Activated B cell treated with CpG ODN at 0.5 μM for 24 hours (primary cell): ENCODE measurements at regions of chr2 and their contacts with region 1.

Region 1: GRCh38 chr2:197705121-197705911 is at the start of gene MARS2:
- DNase-seq: peak; percentile 89
- ATAC-seq: peak; percentile 92
- H3K4me3 Mint-ChIP-seq: peak within 1 kb of the TSS; percentile 89
- H3K27ac Mint-ChIP-seq: peak within 1 kb of the TSS; percentile 89
- H3K4me1 Mint-ChIP-seq: peaks cover 41% of the 10 kb centered on the region
- H3K27me3 Mint-ChIP-seq: peaks cover 14% of the 10 kb centered on the region
- CTCF ChIP-seq: no peak
- total RNA-seq, gene MARS2: 14.6 and 15.4 TPM in 2 replicates

Region 2: GRCh38 chr2:196639180-196640030 is 1065.9 kb before region 1 on chr2 and contains the start of gene CCDC150:
- CTCF ChIA-PET with region 1: no interaction called
- POLR2A ChIA-PET with region 1: no interaction called
- intact Hi-C with region 1: loop called (anchors 1 kb)
- DNase-seq: peak; percentile 90
- ATAC-seq: peak; percentile 100
- H3K4me3 Mint-ChIP-seq: peak within 1 kb of the TSS; percentile 89
- H3K27ac Mint-ChIP-seq: peak within 1 kb of the TSS; percentile 53
- H3K4me1 Mint-ChIP-seq: peaks cover 14% of the 10 kb centered on the region
- H3K27me3 Mint-ChIP-seq: no peaks in the 10 kb centered on the region
- CTCF ChIP-seq: no peak
- total RNA-seq, gene CCDC150: 2.3 and 2.6 TPM in 2 replicates

Region 3: DNA sequence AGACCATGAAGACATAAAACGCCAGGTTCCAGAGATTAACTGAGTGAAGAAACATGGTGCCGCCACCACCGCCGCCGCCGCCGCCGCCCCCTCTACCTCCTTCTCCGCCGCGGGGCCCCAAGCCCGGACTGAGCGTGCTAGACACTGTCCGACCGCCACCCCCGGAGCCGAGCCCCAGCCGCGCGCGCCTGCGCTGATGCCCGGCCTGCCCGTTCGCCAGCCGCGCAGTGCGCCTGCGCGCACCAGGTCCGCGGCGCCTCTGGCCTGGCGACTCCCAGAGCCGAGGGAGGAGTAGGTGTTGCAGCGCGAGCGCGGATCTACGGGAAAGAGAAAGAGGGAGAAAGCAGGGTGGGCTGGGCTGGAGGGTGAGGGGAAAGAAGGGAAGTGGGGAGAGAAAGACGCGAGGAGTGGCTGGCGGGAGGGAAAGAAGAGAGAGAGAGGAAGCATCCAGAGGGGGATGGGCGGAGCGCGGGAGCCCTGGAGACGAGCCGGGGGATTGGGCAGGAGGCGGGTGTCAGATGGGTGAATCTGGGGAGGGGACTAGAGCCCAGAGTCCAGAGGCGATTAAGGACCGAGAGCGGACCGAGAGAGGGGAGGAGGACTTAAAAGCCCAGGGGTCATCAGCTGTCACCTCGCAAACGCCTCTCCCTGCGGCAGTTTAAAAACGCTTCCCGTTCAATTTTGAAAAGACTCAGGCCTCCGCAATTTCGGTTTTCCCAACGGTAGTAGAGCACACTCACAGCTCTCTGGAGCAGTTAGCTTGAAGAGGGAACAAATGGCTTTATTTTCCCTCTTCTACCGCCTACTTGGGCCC is 778.5 kb before region 1 on chr2 and contains the start of gene PGAP1:
- CTCF ChIA-PET with region 1: no interaction called
- POLR2A ChIA-PET with region 1: no interaction called
- intact Hi-C with region 1: loop called (anchors 2 kb)
- DNase-seq: peak; percentile 82
- ATAC-seq: peak; percentile 91
- H3K4me3 Mint-ChIP-seq: peak within 1 kb of the TSS; percentile 90
- H3K27ac Mint-ChIP-seq: peak within 1 kb of the TSS; percentile 86
- H3K4me1 Mint-ChIP-seq: peaks cover 21% of the 10 kb centered on the region
- H3K27me3 Mint-ChIP-seq: peaks cover 13% of the 10 kb centered on the region
- CTCF ChIP-seq: no peak
- total RNA-seq, gene PGAP1: 1.9 and 2.9 TPM in 2 replicates

Region 4: DNA sequence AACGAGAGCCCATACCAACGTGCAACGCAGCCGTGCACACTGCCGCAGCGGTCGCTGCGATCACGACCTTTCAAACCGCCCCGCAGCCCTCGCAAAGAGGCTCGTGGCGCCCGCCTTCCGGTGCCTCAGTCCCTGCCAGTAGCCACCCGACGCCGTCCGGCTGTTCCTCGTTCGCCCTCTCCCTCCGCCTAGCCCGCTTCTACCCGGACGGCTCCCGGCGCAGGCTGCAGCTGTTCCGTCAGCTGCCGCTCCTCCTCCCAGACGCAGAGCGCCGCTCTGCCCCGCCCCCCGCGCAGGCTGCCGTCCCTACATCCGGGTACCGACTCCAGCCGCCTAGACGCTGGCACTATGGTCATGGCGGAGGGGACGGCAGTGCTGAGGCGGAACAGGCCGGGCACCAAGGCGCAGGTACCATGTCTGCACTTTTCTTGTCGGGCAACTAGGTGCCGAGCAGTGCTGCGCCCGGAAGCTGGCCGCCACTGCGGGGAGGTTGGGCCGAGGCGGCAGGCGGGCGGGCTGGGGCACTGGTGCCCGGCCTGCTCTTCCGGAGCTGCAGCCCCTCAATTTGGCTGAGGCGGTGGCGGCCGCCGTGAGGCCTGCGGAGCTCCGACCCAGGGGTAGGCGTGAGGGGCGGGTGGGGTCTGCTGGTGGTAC is 189.4 kb before region 1 on chr2 and contains the start of gene MOB4:
- CTCF ChIA-PET with region 1: no interaction called
- POLR2A ChIA-PET with region 1: interaction called, 7 read pairs
- intact Hi-C with region 1: loop called (anchors 1 kb)
- DNase-seq: peak; percentile 96
- ATAC-seq: peak; percentile 95
- H3K4me3 Mint-ChIP-seq: peak within 1 kb of the TSS; percentile 96
- H3K27ac Mint-ChIP-seq: peak within 1 kb of the TSS; percentile 95
- H3K4me1 Mint-ChIP-seq: peaks cover 33% of the 10 kb centered on the region
- H3K27me3 Mint-ChIP-seq: no peaks in the 10 kb centered on the region
- CTCF ChIP-seq: no peak
- total RNA-seq, gene MOB4: 21.7 and 22.1 TPM in 2 replicates

Region 5: GRCh38 chr2:198127627-198128026 is 422.3 kb after region 1 on chr2:
- CTCF ChIA-PET with region 1: no interaction called
- POLR2A ChIA-PET with region 1: no interaction called
- intact Hi-C with region 1: loop called (anchors 1 kb)
- DNase-seq: no peak
- ATAC-seq: no peak
- H3K4me3 Mint-ChIP-seq: no peak overlapping the region
- H3K27ac Mint-ChIP-seq: no peak overlapping the region
- H3K4me1 Mint-ChIP-seq: no peaks in the 10 kb centered on the region
- H3K27me3 Mint-ChIP-seq: no peaks in the 10 kb centered on the region
- CTCF ChIP-seq: no peak